Psoas muscle (tissue), 8 donors: ENCODE measurements at regions of chr2 and their contacts with region 1.

Region 1: DNA sequence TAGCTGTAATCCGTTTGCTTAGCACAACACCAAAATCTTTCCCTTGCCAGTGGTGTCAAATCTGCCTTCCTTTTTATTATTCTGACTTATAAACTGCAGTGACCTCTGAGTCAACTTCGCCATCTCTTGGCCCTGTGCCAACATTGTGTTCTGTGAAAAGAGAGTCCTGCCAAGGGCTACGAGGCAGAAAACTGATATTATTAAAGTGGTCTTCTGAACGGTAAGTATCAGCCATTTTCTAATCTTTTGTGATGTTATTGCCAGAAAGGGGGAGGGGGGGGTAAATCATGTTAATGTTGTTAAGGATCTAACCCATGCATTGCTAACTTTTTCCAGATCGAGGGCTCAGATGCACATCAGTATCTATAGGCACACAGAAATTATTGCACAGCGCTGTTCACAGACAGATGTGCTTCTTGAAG is 121.5 kb upstream of the LTBP1 start:
- DNase-seq: peak in 1 of 2 donors; percentile 44
- ATAC-seq: peak in 2 of 4 donors; percentile 28 to 63
- H3K4me3 ChIP-seq: peak overlapping the region; percentile 27
- H3K27ac ChIP-seq: peak overlapping the region; percentile 78
- H3K4me1 ChIP-seq: peaks cover 27% of the 10 kb centered on the region
- H3K27me3 ChIP-seq: no peaks in the 10 kb centered on the region
- CTCF ChIP-seq: no peak

Region 2: DNA sequence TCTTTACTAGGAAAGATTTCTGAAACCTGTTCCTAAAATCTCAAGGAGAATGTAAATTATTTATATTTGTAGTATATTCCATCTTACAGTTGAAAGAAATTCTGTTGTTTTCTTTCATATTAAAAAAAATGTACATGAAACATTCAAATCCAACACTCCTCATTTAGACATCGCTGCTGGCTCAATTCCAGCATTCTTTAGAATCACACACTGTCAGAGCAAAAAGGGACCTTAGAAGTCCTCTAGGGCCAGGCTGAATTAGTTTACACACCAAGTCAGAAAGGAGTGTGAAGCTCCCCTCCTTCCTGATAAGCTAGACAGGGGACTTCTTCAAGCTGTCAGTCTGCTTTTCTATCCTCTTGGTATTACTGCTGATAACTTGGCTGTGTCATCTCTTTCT is 37.2 kb before region 1 on chr2:
- intact Hi-C with region 1: loop called in 1 of 2 experiments (anchors 5 kb)
- DNase-seq: no peak
- ATAC-seq: peak in 1 of 4 donors; percentile 42
- H3K4me3 ChIP-seq: no peak overlapping the region
- H3K27ac ChIP-seq: no peak overlapping the region
- H3K4me1 ChIP-seq: peaks cover 27% of the 10 kb centered on the region
- H3K27me3 ChIP-seq: no peaks in the 10 kb centered on the region
- CTCF ChIP-seq: no peak

Region 3: DNA sequence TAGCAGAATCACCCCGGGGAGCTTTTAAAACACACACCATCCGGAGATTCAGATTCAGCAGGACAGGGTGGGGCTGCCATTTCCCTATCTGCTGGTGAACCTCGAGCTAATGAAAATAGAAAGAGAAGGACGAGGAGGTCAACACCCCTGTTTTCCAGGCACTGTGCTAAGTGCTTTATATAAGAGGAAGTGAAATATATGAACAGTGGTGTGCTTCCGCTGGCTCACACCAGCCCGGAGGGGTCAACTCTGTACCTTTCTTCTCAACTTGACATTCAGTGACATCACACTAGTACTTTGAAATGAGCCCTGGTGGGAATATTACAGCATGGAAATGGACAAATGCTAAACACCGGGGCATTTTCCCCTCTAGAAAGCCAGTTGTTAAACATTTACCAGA is 13.1 kb after region 1 on chr2:
- intact Hi-C with region 1: no loop called
- DNase-seq: no peak
- ATAC-seq: no peak
- H3K4me3 ChIP-seq: no peak overlapping the region
- H3K27ac ChIP-seq: peak overlapping the region; percentile 30
- H3K4me1 ChIP-seq: peaks cover 3% of the 10 kb centered on the region
- H3K27me3 ChIP-seq: no peaks in the 10 kb centered on the region
- CTCF ChIP-seq: no peak

Region 4: GRCh38 chr2:32901313-32901712 is 76.0 kb after region 1 on chr2:
- intact Hi-C with region 1: no loop called
- DNase-seq: no peak
- ATAC-seq: no peak
- H3K4me3 ChIP-seq: no peak overlapping the region
- H3K27ac ChIP-seq: no peak overlapping the region
- H3K4me1 ChIP-seq: peaks cover 4% of the 10 kb centered on the region
- H3K27me3 ChIP-seq: peaks cover 0 to 5% (median 2%) of the 10 kb centered on the region in 3 donors
- CTCF ChIP-seq: no peak